Dorsolateral prefrontal cortex (tissue), 120 donors: ENCODE measurements at regions of chr10 and their contacts with region 1.

Region 1: DNA sequence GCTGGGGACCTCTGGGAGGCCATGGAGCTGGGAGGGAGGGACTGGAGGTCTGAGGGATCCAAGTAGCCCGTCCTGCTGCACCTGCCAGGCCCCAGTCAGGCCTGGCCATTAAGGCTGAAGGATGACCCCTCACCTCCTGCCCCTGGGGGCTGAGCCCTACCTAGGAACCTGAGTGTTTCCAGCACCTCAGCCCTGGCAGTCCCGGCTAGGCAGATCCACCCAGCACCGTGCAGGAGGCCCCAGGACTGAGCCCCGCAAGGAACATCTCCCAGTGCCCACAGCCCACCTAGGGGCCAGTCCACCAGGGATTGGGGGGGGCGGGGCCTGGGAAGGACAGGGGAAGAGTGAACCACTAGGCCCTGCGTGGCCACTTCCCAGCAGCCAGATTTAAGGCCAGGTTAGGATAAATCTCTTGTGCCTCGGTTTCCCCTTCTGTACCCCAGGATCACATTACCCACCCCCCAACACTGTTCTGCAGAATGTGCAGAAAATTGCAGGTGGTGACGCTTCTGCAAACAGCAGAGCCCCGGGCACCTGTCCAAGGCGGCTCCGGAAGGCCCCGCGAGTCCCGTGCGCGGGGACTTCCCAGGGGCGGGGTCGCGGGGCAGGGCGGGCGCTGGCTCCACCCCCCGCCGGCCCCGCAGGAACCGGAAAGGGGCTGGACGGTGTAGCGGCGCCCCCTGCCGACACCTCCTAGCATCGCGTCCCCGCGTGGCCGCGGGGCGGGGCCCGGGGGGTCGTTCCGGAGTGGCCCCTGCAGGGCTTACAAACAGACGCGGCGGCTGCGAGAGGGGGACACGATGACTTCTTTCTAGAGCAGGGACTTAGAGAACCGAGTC is 55.9 kb downstream of the PWWP2B start:
- DNase-seq: peak in 6 of 10 donors; percentile 31 to 79 (median 50)
- H3K4me3 ChIP-seq: peak overlapping the region in 52 of 59 donors; percentile 2 to 54 (median 32)
- H3K27ac ChIP-seq: peak overlapping the region in 26 of 59 donors; percentile 1 to 76 (median 42)
- H3K27me3 ChIP-seq: no peaks in the 10 kb centered on the region
- CTCF ChIP-seq: peak; percentile 72 to 98 (median 92)

Region 2: DNA sequence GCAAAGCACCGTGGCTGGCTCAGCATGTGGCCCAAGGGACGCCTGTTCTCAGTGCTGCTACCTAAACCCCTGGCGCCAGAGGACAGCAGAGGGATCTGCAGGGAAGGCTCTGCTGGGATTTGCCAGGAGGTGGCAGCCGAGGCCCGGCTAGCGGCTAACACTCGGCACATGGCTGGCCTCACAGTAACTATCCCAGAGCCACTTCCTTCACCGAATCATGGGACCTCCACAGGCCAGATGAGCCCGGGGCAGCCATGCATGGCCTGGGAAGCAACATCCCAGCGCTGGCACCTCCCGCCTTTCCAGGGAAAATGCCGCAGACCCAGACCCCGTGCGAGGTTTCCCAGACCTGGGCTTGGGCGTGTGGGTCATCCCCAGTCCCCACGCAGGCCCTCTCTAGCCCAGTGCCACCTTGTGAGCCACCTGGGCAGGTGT is 229.7 kb before region 1 on chr10:
- intact Hi-C with region 1: loop called (anchors 1 to 2 kb)
- DNase-seq: peak; percentile 76 to 91 (median 86)
- H3K4me3 ChIP-seq: no peak overlapping the region
- H3K27ac ChIP-seq: peak overlapping the region in 1 of 59 donors; percentile 15
- H3K27me3 ChIP-seq: no peaks in the 10 kb centered on the region
- CTCF ChIP-seq: peak; percentile 66 to 99 (median 94)

Region 3: DNA sequence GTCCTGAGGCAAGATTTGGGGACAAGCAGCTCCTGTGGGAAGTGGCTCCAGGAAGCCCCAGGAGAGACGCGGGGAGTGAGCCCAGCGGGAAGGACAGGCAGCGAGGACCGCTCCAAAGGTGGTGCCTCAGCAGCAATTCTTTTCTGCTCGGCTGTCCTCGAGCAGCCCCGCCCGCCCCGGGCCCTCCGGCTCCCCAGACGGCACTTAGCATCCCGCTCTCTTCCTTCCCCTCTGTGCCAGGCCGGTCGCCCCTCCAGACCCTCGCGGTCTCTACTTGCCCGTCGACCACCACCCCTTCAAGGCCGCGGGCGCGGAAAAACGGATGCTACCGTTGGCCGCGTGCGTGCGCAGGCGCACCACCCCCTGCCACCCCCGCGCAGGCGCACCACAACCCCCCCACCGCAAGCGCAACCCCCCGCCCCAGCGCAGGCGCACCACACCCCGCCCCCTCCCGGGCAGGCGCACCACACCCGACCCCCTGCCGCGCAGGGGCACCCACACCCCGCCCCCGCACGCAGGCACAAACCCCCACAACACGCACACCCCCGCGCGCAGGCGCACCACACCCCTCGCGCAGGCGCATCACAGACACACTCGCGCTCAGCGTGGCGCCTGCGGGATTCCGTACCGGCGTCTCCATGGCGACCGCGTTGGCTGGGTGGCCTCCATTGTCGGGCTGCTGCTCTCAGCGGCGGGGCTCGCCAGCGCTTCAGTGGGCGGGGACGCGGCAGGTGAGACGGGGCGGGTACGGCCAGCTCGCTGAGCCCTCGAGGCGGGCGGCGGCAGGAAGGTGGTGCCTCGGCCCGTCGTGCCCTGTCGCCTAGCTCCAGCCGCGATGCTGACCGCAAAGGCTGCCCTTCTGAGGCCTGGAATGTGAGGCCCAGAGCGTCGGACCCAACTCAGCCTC is 121.1 kb before region 1 on chr10 and contains the start of gene LRRC27:
- intact Hi-C with region 1: no loop called
- DNase-seq: peak; percentile 90 to 97 (median 94)
- H3K4me3 ChIP-seq: peak within 1 kb of the TSS; percentile 63 to 99 (median 91)
- H3K27ac ChIP-seq: peak within 1 kb of the TSS in 58 of 59 donors; percentile 5 to 92 (median 84)
- H3K27me3 ChIP-seq: no peaks in the 10 kb centered on the region
- CTCF ChIP-seq: peak in 11 of 56 donors; percentile 6 to 29 (median 17)
- total RNA-seq, gene LRRC27: 14.0 to 36.4 (median 25.3) TPM

Region 4: DNA sequence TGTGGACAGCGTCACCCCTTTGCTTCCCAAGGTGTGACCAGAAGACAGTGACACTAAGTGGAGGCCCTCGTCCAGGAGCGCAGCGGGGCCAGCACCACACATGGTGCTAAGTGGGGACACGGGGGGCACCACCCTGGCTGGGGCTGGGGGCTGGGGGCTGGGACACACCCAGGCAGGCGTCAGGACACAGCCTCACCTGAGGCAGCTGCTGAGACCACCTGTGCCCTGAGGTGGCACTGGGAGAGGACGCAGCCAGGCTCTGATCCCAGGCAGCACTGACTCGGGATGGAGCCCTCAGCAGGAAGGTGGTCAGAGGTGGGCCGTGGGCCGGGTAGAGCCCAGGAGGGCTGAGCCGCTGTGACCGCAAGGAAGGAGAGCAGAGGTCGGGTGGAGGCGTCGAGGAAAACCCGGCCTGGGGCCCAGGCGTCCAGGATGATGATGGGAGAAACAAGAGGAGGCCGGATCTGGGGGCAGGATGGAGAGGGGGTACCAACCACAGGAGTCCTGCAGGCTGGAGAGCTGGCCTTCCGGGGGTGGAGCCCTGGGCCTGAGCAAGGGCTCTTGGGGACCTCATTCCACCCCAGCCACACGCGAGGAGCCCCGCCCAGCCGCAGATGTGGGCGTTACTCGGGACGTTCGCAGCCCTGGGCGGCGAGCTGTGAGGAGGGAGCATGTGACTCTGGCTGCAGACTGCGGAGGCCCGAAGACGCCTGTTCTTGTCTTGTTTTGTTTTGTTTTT is 98.3 kb before region 1 on chr10:
- intact Hi-C with region 1: no loop called
- DNase-seq: peak in 6 of 10 donors; percentile 26 to 51 (median 43)
- H3K4me3 ChIP-seq: no peak overlapping the region
- H3K27ac ChIP-seq: peak overlapping the region in 7 of 59 donors; percentile 25 to 67 (median 37)
- H3K27me3 ChIP-seq: no peaks in the 10 kb centered on the region
- CTCF ChIP-seq: no peak

Region 5: DNA sequence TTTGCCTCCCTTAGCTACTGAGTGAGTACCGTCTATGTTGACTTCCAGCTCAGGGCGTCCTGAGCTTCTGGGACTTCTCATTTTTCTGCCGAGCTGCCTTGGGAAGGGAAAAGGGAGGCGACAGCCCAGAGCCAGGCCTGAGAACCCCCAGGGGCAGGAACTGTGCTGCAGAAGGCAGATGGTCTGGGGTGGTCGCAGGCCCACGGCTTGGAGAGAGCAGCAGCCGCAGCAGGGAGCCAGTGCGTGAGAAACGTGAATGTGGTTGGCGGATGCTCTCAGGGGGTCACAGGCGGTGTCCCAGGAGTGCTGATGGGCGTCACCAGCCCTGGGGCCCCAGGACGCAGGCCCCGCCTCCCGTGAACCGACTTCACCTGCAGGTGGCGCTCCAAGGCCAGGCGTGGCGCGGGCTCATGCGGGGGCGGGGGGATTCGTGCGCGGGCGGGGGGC is 65.1 kb before region 1 on chr10:
- intact Hi-C with region 1: loop called (anchors 1 to 2 kb)
- DNase-seq: peak in 4 of 10 donors; percentile 20 to 57 (median 49)
- H3K4me3 ChIP-seq: peak overlapping the region in 1 of 59 donors; percentile 30
- H3K27ac ChIP-seq: peak overlapping the region in 7 of 59 donors; percentile 15 to 64 (median 28)
- H3K27me3 ChIP-seq: no peaks in the 10 kb centered on the region
- CTCF ChIP-seq: peak; percentile 19 to 76 (median 58)

Region 6: DNA sequence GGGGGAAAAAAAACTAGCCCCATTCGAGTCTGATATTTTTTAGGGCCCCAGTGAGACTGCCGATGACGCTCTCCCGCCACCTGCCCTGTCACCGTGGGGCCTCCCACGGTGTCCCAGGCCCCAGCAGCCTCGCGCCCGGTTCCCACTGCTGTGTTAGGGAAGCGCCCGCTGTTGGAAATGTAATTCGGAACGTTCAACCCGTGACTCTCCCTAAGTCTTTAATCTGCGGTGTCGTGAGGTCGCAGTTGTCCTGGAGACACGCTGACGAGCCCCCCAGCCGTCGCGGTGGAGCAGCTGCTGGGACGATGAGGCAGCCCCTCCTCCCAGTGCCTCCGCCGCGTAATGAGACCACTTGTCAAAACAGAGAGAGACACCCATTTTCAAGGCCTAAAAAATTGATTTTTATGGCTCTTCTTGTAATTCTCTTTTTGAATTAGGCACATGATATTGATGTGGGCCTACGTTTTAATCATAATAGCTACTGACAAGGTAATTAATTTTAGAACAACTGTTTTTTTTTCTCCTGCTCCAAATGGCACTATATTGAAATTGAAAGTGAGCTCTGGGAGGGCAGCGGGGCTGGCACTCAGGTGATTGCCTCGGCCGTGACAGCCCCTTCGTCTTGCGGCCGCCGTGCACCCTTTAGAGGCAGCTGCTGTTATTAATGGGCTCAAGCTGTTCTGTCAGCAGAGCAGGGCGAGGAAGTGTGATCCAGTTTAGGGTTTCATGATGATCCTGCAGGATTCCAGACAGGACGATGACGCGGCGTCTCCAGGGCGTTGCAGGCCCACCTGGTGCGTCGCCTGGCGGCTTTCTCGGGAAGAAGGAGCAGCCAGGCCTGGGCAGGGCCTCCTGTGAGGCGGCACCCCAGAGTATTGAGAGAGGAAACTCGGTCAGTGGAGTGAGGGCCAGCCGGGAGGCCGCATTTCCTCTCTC is 269.8 kb after region 1 on chr10:
- intact Hi-C with region 1: loop called in 1 of 2 experiments (anchors 10 kb)
- DNase-seq: no peak
- H3K4me3 ChIP-seq: no peak overlapping the region
- H3K27ac ChIP-seq: no peak overlapping the region
- H3K27me3 ChIP-seq: no peaks in the 10 kb centered on the region
- CTCF ChIP-seq: no peak